K562 (cell line): ENCODE measurements at regions of chr20 and their contacts with region 1.

Region 1: DNA sequence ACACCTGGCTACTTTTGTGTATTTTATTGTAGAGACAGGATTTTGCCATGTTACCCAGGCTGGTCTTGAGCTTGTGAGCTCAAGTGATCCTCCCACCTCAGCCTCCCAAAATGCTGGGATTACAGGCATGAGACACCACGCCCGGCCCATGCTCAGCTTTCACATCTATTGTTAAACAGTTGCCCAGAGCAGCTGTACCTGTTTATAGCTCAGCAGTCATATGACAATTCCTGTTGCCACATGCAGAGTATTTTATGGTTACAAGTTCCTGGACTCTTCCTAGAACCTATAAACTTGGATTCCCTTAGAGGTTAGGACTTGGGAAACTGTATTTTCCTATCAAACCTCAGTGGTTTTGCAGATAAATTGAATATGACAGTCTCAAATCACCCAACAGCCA is 188.3 kb upstream of the KCNG1 start:
- DNase-seq: no peak
- ATAC-seq: no peak
- H3K4me3 ChIP-seq: no peak overlapping the region
- H3K27ac ChIP-seq: no peak overlapping the region
- H3K4me1 ChIP-seq: no peaks in the 10 kb centered on the region
- H3K27me3 ChIP-seq: peaks cover 0 to 3% of the 10 kb centered on the region in 2 experiments; a peak in 1 of 5 replicates
- CTCF ChIP-seq: no peak
- EP300 ChIP-seq: no peak
- POLR2A ChIP-seq: no peak
- RAD21 ChIP-seq: no peak

Region 2: DNA sequence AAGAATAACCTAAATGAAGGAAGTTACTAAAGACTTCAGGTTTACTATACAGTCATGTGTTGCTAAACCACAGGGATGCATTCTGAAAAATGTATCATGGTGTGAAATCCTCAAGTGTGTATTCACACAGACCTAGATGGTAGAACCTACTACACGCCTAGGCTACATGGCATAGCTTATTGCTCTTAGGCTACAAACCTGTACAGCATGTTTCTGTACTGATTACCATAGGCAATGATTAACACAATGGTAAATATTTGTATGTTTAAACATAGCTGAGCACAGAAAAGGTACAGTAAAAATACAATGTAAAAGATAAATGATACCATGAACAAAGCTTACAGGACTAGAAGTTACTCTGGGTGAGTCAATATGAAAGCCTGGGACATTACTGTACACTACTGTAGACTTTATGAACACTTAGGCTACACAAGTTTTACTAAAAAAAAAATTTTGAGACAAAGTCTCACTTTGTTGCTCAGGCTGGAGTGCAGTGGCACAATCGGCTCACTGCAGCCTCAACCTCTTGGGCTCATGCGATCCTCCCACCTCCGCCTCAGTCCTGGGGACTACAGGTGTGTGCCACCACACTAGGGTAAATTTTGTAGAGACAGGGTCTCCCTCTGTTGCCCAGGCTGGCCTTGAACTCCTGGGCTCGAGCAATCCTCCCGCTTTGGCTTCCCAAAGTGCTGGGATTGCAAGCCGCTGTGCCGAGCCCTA is 315.9 kb before region 1 on chr20:
- CTCF ChIA-PET with region 1: no interaction called
- POLR2A ChIA-PET with region 1: no interaction called
- in situ Hi-C with region 1: no loop called
- intact Hi-C with region 1: no loop called
- DNase-seq: no peak
- ATAC-seq: no peak
- H3K4me3 ChIP-seq: no peak overlapping the region
- H3K27ac ChIP-seq: no peak overlapping the region
- H3K4me1 ChIP-seq: no peaks in the 10 kb centered on the region
- H3K27me3 ChIP-seq: no peaks in the 10 kb centered on the region
- CTCF ChIP-seq: no peak
- EP300 ChIP-seq: no peak
- POLR2A ChIP-seq: no peak
- RAD21 ChIP-seq: no peak

Region 3: GRCh38 chr20:51258582-51259180 is 47.5 kb after region 1 on chr20:
- CTCF ChIA-PET with region 1: no interaction called
- POLR2A ChIA-PET with region 1: interaction called, 3 read pairs
- in situ Hi-C with region 1: loop called (anchors 5 kb)
- intact Hi-C with region 1: no loop called
- DNase-seq: no peak
- ATAC-seq: no peak
- H3K4me3 ChIP-seq: no peak overlapping the region
- H3K27ac ChIP-seq: no peak overlapping the region
- H3K4me1 ChIP-seq: no peaks in the 10 kb centered on the region
- H3K27me3 ChIP-seq: peaks cover 14 to 30% of the 10 kb centered on the region in 2 experiments; a peak in 4 of 5 replicates
- CTCF ChIP-seq: no peak
- EP300 ChIP-seq: no peak
- POLR2A ChIP-seq: no peak
- RAD21 ChIP-seq: no peak

Region 4: GRCh38 chr20:51404298-51405060 is 193.3 kb after region 1 on chr20:
- CTCF ChIA-PET with region 1: no interaction called
- POLR2A ChIA-PET with region 1: no interaction called
- in situ Hi-C with region 1: no loop called
- intact Hi-C with region 1: no loop called
- DNase-seq: no peak
- ATAC-seq: no peak
- H3K4me3 ChIP-seq: no peak overlapping the region
- H3K27ac ChIP-seq: no peak overlapping the region
- H3K4me1 ChIP-seq: no peaks in the 10 kb centered on the region; a peak in 2 of 5 replicates
- H3K27me3 ChIP-seq: no peaks in the 10 kb centered on the region
- CTCF ChIP-seq: no peak
- EP300 ChIP-seq: no peak
- POLR2A ChIP-seq: no peak
- RAD21 ChIP-seq: no peak